ENCODE measurements at regions of chr11 and their contacts with region 1.

Region 1: GRCh38 chr11:60363542-60364510 is 14.5 kb upstream of the MS4A7 start:
- DNase-seq: peak; percentile 77
- H3K4me3 Mint-ChIP-seq: no peak overlapping the region
- H3K27ac Mint-ChIP-seq: no peak overlapping the region
- H3K4me1 Mint-ChIP-seq: peaks cover 8% of the 10 kb centered on the region
- H3K27me3 Mint-ChIP-seq: peaks cover 30% of the 10 kb centered on the region
- CTCF ChIP-seq: peak; percentile 79

Region 2: GRCh38 chr11:60345489-60345888 is 18.3 kb before region 1 on chr11:
- CTCF ChIA-PET with region 1: interaction called, 24 read pairs
- POLR2A ChIA-PET with region 1: interaction called, 3 read pairs
- intact Hi-C with region 1: no loop called
- DNase-seq: peak; percentile 42
- H3K4me3 Mint-ChIP-seq: no peak overlapping the region
- H3K27ac Mint-ChIP-seq: no peak overlapping the region
- H3K4me1 Mint-ChIP-seq: no peaks in the 10 kb centered on the region
- H3K27me3 Mint-ChIP-seq: peaks cover 72% of the 10 kb centered on the region
- CTCF ChIP-seq: peak; percentile 24

Region 3: DNA sequence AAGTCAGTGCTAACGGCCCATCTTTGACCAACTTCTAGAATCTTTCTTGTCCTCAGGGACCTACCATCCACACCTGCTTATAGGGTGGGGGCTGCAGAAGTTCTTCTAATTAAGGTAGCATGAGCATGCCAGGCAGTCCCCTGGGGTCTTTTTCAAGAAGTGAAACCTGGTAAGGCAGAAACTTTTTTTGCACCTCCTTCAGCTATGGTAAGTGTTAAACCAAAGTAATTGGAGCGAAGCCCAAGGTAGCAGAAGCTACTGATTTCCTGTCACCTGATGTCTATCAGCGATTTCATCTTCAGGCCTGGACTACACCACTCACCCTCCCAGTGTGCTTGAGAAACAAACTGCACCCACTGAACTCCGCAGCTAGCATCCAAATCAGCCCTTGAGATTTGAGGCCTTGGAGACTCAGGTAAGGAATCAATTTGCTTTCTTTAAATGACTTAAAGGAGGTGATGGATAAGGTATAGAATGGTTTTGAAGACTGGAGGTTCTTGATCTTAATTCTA is 91.8 kb after region 1 on chr11 and contains the start of gene MS4A1:
- CTCF ChIA-PET with region 1: interaction called, 10 read pairs
- POLR2A ChIA-PET with region 1: no interaction called
- intact Hi-C with region 1: no loop called
- DNase-seq: no peak
- H3K4me3 Mint-ChIP-seq: no peak within 1 kb of the TSS
- H3K27ac Mint-ChIP-seq: no peak within 1 kb of the TSS
- H3K4me1 Mint-ChIP-seq: no peaks in the 10 kb centered on the region
- H3K27me3 Mint-ChIP-seq: peaks cover 19% of the 10 kb centered on the region
- CTCF ChIP-seq: no peak
- total RNA-seq, gene MS4A1: not detected in 2 replicates

Region 4: GRCh38 chr11:60607483-60607882 is 243.7 kb after region 1 on chr11:
- CTCF ChIA-PET with region 1: interaction called, 13 read pairs
- POLR2A ChIA-PET with region 1: no interaction called
- intact Hi-C with region 1: no loop called
- DNase-seq: no peak
- H3K4me3 Mint-ChIP-seq: no peak overlapping the region
- H3K27ac Mint-ChIP-seq: no peak overlapping the region
- H3K4me1 Mint-ChIP-seq: no peaks in the 10 kb centered on the region
- H3K27me3 Mint-ChIP-seq: peaks cover 50% of the 10 kb centered on the region
- CTCF ChIP-seq: peak; percentile 10

Region 5: DNA sequence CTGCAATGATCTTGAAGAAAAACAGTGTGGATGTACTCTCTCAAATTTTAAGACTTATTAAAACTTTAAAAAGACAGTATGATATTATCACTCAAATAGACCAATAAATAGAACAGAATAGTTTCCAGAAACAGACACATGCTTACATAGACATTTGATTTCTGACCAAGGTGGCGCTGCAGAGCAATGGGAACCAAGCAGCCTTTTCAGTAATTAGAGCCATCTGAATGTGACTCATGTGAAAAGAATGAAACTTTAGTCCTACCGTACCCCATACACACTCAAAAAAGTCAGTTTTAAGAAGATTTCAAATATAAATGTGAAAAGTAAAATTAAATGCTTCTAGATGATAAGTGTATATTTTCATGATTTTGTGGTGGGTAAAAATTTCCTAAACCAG is 261.4 kb after region 1 on chr11:
- CTCF ChIA-PET with region 1: interaction called, 87 read pairs
- POLR2A ChIA-PET with region 1: no interaction called
- intact Hi-C with region 1: no loop called
- DNase-seq: peak; percentile 72
- H3K4me3 Mint-ChIP-seq: no peak overlapping the region
- H3K27ac Mint-ChIP-seq: no peak overlapping the region
- H3K4me1 Mint-ChIP-seq: no peaks in the 10 kb centered on the region
- H3K27me3 Mint-ChIP-seq: peaks cover 11% of the 10 kb centered on the region
- CTCF ChIP-seq: peak; percentile 15

Region 6: GRCh38 chr11:60762851-60763691 is 399.2 kb after region 1 on chr11:
- CTCF ChIA-PET with region 1: interaction called, 14 read pairs
- POLR2A ChIA-PET with region 1: no interaction called
- intact Hi-C with region 1: no loop called
- DNase-seq: peak; percentile 29
- H3K4me3 Mint-ChIP-seq: no peak overlapping the region
- H3K27ac Mint-ChIP-seq: no peak overlapping the region
- H3K4me1 Mint-ChIP-seq: no peaks in the 10 kb centered on the region
- H3K27me3 Mint-ChIP-seq: peaks cover 33% of the 10 kb centered on the region
- CTCF ChIP-seq: peak; percentile 30